Right ventricle myocardium inferior (tissue), 1 donor: ENCODE measurements at regions of chrX and their contacts with region 1.

Region 1: DNA sequence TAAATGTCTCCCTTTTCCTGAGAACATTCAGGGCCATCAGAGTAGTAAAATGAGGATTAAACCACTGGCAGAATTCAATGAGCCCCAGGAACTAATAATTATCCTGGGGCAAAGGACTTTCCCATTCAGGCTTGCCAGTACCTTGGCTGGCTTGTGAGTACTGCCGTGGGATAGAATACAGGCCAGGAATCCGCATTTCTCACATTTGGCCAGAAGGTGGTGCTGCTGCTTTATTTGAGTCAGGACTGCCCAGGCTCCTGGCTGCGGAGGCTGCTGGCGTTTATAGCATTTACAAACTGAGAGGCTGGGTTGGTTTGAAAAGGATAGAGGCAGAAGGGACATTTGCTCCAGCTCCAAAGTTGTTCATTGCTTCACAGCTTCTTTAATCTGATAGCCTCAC is 91.4 kb downstream of the RTL9 start:
- DNase-seq: peak; percentile 65
- ATAC-seq: peak; percentile 88

Region 2: GRCh38 chrX:110665223-110666002 is 215.4 kb after region 1 on chrX:
- intact Hi-C with region 1: loop called (anchors 5 kb)
- DNase-seq: no peak
- ATAC-seq: peak; percentile 76

Region 3: GRCh38 chrX:110847334-110847733 is 397.3 kb after region 1 on chrX:
- intact Hi-C with region 1: loop called (anchors 2 kb)
- DNase-seq: no peak
- ATAC-seq: no peak

Region 4: DNA sequence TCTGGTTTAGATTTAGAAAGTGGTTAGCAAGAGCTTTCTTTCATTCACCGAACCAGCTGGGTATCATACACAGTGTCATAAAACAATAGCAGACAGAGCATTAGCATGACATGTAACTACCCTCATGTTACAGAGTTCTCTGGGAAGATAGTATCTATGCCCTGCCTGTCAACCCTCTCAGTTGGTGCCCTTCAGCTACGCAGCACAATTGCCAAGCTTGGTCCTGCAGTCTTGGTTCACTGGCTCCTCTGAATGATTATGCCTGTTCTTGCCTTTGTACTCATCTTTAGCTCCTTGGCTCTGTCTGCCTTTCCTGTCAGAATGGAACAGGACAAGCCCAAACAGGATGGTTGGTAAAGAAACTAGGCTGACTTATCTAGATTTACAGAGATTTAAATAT is 871.1 kb after region 1 on chrX:
- intact Hi-C with region 1: no loop called
- DNase-seq: no peak
- ATAC-seq: no peak